Activated B cell treated with CpG ODN at 0.5 μM for 24 hours (primary cell): ENCODE measurements at regions of chr3 and their contacts with region 1.

Region 1: DNA sequence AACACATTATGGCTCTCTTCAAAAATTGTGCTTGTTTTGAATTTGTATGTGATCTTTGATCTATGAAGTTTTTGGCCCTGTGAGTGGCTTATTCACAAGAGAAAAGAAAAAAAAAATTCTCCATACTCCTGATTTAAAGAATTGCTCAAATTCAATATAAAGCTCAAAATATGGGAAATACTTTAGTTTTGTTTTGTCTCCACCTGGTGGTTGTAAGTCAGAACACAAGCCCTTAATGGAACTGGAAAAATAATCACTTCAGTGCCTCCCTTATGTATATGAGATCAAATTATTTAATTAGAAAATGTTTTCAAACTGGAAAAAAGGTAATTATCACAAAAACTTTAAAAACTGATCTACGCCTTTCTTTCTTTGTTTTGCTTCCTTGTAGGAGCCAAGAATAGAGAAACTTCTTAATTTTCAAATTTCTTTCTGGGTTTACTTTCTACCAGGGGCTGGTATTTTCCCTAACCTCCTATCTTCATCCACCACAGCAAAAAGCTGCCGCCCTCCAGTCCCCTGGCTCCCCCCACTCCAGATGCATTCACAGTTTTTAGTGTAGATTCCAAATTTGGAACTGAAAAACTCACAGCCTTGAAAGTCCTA is 50.6 kb downstream of the SERP1 start:
- DNase-seq: no peak
- ATAC-seq: peak; percentile 60
- H3K4me3 Mint-ChIP-seq: no peak overlapping the region
- H3K27ac Mint-ChIP-seq: no peak overlapping the region
- H3K4me1 Mint-ChIP-seq: no peaks in the 10 kb centered on the region
- H3K27me3 Mint-ChIP-seq: no peaks in the 10 kb centered on the region
- CTCF ChIP-seq: peak; percentile 75

Region 2: GRCh38 chr3:148847351-148847750 is 1648.3 kb before region 1 on chr3:
- CTCF ChIA-PET with region 1: no interaction called
- POLR2A ChIA-PET with region 1: no interaction called
- intact Hi-C with region 1: no loop called
- DNase-seq: no peak
- ATAC-seq: no peak
- H3K4me3 Mint-ChIP-seq: no peak overlapping the region
- H3K27ac Mint-ChIP-seq: no peak overlapping the region
- H3K4me1 Mint-ChIP-seq: no peaks in the 10 kb centered on the region
- H3K27me3 Mint-ChIP-seq: peaks cover 2% of the 10 kb centered on the region
- CTCF ChIP-seq: no peak

Region 3: DNA sequence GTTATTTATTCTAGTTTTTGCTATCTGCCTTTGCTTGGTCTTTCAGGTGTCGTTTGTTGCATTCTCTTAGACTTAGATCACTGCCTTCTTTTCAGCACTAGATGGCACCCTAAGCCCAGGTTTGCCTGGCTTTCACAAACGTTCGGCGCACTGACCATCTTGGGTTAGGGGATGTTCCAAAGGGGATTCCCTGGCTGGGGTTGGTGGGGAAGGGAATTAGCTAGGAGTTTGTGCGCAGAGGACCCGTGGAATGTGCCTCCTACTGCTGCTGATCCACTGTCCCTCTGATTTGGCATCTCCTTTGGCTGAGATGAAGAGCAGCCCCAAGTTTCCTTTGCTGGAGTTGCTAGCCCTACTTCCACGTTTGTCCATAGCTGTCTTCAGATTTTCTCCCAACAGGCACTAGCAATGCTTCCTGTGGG is 558.8 kb before region 1 on chr3:
- CTCF ChIA-PET with region 1: interaction called, 8 read pairs
- POLR2A ChIA-PET with region 1: no interaction called
- intact Hi-C with region 1: loop called (anchors 1 kb)
- DNase-seq: no peak
- ATAC-seq: peak; percentile 42
- H3K4me3 Mint-ChIP-seq: no peak overlapping the region
- H3K27ac Mint-ChIP-seq: no peak overlapping the region
- H3K4me1 Mint-ChIP-seq: peaks cover 15% of the 10 kb centered on the region
- H3K27me3 Mint-ChIP-seq: no peaks in the 10 kb centered on the region
- CTCF ChIP-seq: no peak

Region 4: GRCh38 chr3:150227839-150228238 is 267.8 kb before region 1 on chr3:
- CTCF ChIA-PET with region 1: interaction called, 7 read pairs
- POLR2A ChIA-PET with region 1: no interaction called
- intact Hi-C with region 1: loop called (anchors 1 kb)
- DNase-seq: no peak
- ATAC-seq: peak; percentile 21
- H3K4me3 Mint-ChIP-seq: no peak overlapping the region
- H3K27ac Mint-ChIP-seq: no peak overlapping the region
- H3K4me1 Mint-ChIP-seq: no peaks in the 10 kb centered on the region
- H3K27me3 Mint-ChIP-seq: peaks cover 29% of the 10 kb centered on the region
- CTCF ChIP-seq: no peak

Region 5: DNA sequence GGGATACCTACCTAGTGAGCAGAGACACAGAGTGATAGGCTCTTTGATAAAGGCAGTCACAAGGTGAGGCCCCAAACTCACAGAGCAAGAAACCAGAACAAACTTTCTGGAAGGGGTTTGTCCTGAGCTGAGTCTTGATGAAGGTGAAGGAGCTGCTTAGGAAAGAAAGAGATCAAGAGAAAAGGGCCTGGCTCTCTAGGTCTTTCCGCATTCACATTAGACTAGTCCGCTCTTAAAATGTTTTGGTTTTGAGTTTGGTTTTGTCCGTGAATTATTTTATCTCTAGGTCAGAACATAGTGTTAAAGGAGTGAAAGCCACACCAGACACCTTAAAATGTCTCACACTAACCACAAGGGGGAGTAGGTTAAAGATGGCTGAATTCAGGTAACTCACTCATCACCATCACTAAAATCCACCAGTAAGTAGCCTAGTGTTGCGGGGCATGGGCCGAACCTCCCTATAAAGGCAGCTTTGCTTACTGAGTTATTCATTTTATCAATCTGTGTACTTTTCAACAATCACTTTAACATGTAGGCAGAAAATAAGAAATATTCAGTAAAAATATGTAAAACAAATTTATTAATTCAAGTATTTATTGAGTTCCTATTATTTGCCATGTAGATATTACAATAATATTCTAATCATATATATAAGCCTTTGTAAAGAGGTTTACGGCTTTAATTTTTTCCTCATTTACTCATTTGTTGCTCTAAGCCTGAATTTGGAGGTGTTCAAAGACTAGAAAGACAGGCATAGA is 209.1 kb before region 1 on chr3:
- CTCF ChIA-PET with region 1: interaction called, 102 read pairs
- POLR2A ChIA-PET with region 1: no interaction called
- intact Hi-C with region 1: loop called (anchors 1 kb)
- DNase-seq: no peak
- ATAC-seq: peak; percentile 74
- H3K4me3 Mint-ChIP-seq: no peak overlapping the region
- H3K27ac Mint-ChIP-seq: no peak overlapping the region
- H3K4me1 Mint-ChIP-seq: no peaks in the 10 kb centered on the region
- H3K27me3 Mint-ChIP-seq: peaks cover 21% of the 10 kb centered on the region
- CTCF ChIP-seq: peak; percentile 54

Region 6: DNA sequence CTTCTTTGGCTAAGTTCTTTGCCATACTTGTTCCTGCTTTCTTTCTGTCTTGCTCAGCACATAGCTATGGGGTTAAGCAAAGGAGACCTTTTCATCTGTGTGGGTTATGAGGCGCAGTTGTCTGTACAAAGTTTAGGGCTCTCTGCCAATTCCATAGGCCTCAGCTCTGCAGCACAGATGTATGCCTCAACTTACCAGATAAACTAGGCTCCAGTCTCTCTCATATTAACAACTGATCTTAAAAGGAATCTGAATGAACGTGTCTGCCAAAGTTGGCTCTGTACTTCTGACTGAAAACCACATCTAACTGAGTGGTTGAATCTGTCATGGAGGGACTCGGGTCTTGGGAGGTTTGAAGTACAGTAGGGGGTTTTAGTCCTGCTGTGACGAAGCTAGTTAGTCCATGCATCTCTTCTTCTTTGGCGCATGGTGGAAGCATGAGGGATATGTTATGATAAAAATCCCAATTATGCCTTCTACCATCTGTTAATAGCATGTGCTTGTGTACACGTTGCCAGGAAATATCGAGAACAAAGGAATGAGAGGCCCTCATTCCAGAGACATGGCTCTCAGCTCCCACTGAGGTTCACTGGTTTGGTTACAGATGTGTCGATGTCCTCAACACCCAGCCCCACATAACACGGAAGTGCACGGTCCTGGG is 202.1 kb before region 1 on chr3:
- CTCF ChIA-PET with region 1: interaction called, 102 read pairs
- POLR2A ChIA-PET with region 1: no interaction called
- intact Hi-C with region 1: no loop called
- DNase-seq: no peak
- ATAC-seq: no peak
- H3K4me3 Mint-ChIP-seq: no peak overlapping the region
- H3K27ac Mint-ChIP-seq: no peak overlapping the region
- H3K4me1 Mint-ChIP-seq: no peaks in the 10 kb centered on the region
- H3K27me3 Mint-ChIP-seq: peaks cover 27% of the 10 kb centered on the region
- CTCF ChIP-seq: no peak

Region 7: GRCh38 chr3:150384296-150385212 is 111.1 kb before region 1 on chr3:
- CTCF ChIA-PET with region 1: interaction called, 5 read pairs
- POLR2A ChIA-PET with region 1: interaction called, 5 read pairs
- intact Hi-C with region 1: loop called (anchors 1 kb)
- DNase-seq: peak; percentile 47
- ATAC-seq: peak; percentile 95
- H3K4me3 Mint-ChIP-seq: peak overlapping the region; percentile 84
- H3K27ac Mint-ChIP-seq: peak overlapping the region; percentile 98
- H3K4me1 Mint-ChIP-seq: peaks cover 42% of the 10 kb centered on the region
- H3K27me3 Mint-ChIP-seq: no peaks in the 10 kb centered on the region
- CTCF ChIP-seq: no peak

Region 8: GRCh38 chr3:150528354-150528797 is 32.7 kb after region 1 on chr3:
- CTCF ChIA-PET with region 1: no interaction called
- POLR2A ChIA-PET with region 1: no interaction called
- intact Hi-C with region 1: no loop called
- DNase-seq: no peak
- ATAC-seq: no peak
- H3K4me3 Mint-ChIP-seq: no peak overlapping the region
- H3K27ac Mint-ChIP-seq: no peak overlapping the region
- H3K4me1 Mint-ChIP-seq: no peaks in the 10 kb centered on the region
- H3K27me3 Mint-ChIP-seq: no peaks in the 10 kb centered on the region
- CTCF ChIP-seq: no peak